ENCODE measurements at regions of chr2 and their contacts with region 1.

Region 1: DNA sequence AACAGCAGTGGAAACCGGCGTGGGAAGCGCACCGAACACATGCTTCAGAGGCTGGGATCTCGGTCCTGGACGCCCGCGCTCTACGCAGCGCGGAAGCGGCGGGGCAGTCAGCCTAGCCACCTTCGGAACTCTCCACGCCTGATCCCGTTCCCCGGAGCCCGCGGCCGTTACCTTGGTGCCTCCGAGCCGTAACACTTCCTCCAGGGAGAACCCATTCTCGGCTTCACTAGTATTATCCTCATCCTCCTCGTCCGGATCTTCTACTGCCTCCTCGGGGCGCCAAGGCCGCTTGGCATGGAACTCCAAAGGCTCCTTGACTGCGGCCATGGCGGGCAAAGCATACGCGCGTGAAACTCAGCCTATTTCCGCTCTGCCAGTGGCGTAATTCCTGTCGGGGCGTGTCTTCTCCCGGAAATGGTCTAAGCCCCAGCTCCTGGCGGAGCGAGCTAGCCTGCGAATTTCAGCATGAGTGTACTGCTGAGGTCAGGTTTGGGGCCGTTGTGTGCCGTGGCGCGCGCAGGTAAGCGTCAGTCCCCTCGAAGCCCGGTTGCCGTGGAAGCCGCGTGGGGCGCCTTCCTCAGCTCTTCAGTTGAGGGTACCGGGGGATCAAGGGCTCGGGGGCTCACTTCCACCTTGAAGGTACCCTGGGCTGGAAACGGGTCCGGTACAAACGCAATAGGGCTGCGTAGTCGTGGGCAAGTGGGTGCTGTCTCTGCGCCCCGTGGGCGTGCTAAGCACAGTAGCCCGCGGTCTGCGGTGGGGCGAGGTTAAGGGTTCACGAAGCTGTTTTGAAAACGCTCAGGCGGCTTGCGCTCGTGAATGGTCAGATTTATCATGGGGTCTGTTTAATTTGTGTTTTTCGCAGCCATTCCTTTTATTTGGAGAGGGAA is at the starts of genes CEBPZ and NDUFAF7:
- DNase-seq: peak; percentile 71 to 87 (median 84)
- ATAC-seq: peak; percentile 95
- H3K4me3 ChIP-seq: peak within 1 kb of the TSS; percentile 84
- H3K4me3 Mint-ChIP-seq: no peak within 1 kb of the TSS
- H3K27ac ChIP-seq: peak within 1 kb of the TSS; percentile 93
- H3K27ac Mint-ChIP-seq: no peak within 1 kb of the TSS
- H3K4me1 ChIP-seq: peaks cover 31 to 39% of the 10 kb centered on the region in 2 donors
- H3K4me1 Mint-ChIP-seq: peaks cover 25 to 54% (median 43%) of the 10 kb centered on the region in 7 donors
- H3K27me3 ChIP-seq: no peaks in the 10 kb centered on the region
- H3K27me3 Mint-ChIP-seq: no peaks in the 10 kb centered on the region
- total RNA-seq, gene CEBPZ: 40.4 to 67.6 (median 56.4) TPM
- total RNA-seq, gene NDUFAF7: 21.6 to 38.2 (median 28.5) TPM

Region 2: GRCh38 chr2:37083873-37084794 is 147.4 kb before region 1 on chr2 and contains the starts of genes GPATCH11 and HEATR5B:
- CTCF ChIA-PET with region 1: no interaction called
- POLR2A ChIA-PET with region 1: no interaction called
- intact Hi-C with region 1: loop called (anchors 1 kb)
- DNase-seq: peak; percentile 76 to 94 (median 92)
- ATAC-seq: peak; percentile 87
- H3K4me3 ChIP-seq: peak within 1 kb of the TSS; percentile 74
- H3K4me3 Mint-ChIP-seq: peak within 1 kb of the TSS in 1 of 10 donors; percentile 64
- H3K27ac ChIP-seq: peak within 1 kb of the TSS; percentile 85
- H3K27ac Mint-ChIP-seq: no peak within 1 kb of the TSS
- H3K4me1 ChIP-seq: peaks cover 35 to 45% of the 10 kb centered on the region in 2 donors
- H3K4me1 Mint-ChIP-seq: peaks cover 8 to 62% (median 50%) of the 10 kb centered on the region in 7 donors
- H3K27me3 ChIP-seq: no peaks in the 10 kb centered on the region
- H3K27me3 Mint-ChIP-seq: no peaks in the 10 kb centered on the region
- total RNA-seq, gene GPATCH11: 6.0 to 19.0 (median 11.1) TPM
- total RNA-seq, gene HEATR5B: 25.2 to 50.5 (median 39.3) TPM

Region 3: DNA sequence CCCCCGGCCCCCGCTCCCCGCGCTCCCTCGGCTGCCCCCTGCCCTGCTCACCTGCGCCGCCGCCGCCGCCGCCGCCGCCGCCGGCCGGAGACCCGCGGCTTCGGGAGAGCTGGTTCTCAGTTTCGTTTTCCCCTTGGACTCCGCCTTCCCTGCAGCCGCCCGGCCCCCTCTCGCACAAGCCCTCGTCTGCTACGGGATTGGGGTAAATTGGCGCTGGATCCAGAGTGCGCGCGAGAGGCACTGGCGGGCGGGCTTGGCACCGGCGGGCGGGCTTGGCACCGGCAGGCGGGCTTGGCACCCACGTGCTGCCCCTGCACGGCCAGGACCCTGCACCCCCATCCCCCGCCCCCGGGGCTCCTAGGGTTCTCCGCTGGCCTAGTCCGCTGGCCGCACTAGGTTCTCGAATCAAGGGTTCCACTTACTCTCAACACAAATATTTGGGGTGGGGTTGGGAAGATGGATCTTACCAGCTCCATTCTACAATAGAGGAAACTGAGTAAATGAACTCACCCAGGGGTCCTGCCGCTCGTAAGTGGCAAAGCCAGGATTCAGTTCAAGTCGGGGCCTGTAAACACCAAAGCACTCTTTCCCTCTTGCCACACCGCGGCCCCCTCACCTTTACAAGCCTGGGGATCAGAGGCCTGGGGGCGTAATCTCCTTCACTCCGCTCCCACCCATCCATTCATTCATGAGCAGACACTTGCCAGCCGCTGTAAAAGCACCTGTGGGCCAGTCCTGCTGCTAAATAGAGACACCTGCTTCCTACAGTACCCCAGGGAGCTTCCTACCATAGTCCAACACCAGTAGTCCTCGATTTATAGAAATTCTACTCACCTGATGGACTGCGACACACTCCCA is 74.4 kb before region 1 on chr2 and contains the start of gene EIF2AK2:
- CTCF ChIA-PET with region 1: no interaction called
- POLR2A ChIA-PET with region 1: no interaction called
- intact Hi-C with region 1: loop called (anchors 1 kb)
- DNase-seq: peak; percentile 59 to 85 (median 80)
- ATAC-seq: peak; percentile 96
- H3K4me3 ChIP-seq: peak within 1 kb of the TSS; percentile 92
- H3K4me3 Mint-ChIP-seq: peak within 1 kb of the TSS; percentile 88 to 99 (median 94)
- H3K27ac ChIP-seq: peak within 1 kb of the TSS; percentile 81
- H3K27ac Mint-ChIP-seq: peak within 1 kb of the TSS; percentile 86 to 96 (median 92)
- H3K4me1 ChIP-seq: peaks cover 18 to 25% of the 10 kb centered on the region in 2 donors
- H3K4me1 Mint-ChIP-seq: peaks cover 29 to 57% (median 48%) of the 10 kb centered on the region in 7 donors
- H3K27me3 ChIP-seq: no peaks in the 10 kb centered on the region
- H3K27me3 Mint-ChIP-seq: peaks cover 0 to 4% (median 0%) of the 10 kb centered on the region in 5 donors
- total RNA-seq, gene EIF2AK2: 21.2 to 91.9 (median 24.2) TPM

Region 4: GRCh38 chr2:37168217-37168981 is 63.1 kb before region 1 on chr2:
- CTCF ChIA-PET with region 1: no interaction called
- POLR2A ChIA-PET with region 1: no interaction called
- intact Hi-C with region 1: loop called (anchors 2 kb)
- DNase-seq: peak in 6 of 9 donors; percentile 14 to 52 (median 40)
- ATAC-seq: peak; percentile 80
- H3K4me3 ChIP-seq: no peak overlapping the region
- H3K4me3 Mint-ChIP-seq: no peak overlapping the region
- H3K27ac ChIP-seq: no peak overlapping the region
- H3K27ac Mint-ChIP-seq: peak overlapping the region in 1 of 9 donors; percentile 32
- H3K4me1 ChIP-seq: no peaks in the 10 kb centered on the region
- H3K4me1 Mint-ChIP-seq: no peaks in the 10 kb centered on the region
- H3K27me3 ChIP-seq: no peaks in the 10 kb centered on the region
- H3K27me3 Mint-ChIP-seq: peaks cover 0 to 3% (median 0%) of the 10 kb centered on the region in 5 donors

Region 5: DNA sequence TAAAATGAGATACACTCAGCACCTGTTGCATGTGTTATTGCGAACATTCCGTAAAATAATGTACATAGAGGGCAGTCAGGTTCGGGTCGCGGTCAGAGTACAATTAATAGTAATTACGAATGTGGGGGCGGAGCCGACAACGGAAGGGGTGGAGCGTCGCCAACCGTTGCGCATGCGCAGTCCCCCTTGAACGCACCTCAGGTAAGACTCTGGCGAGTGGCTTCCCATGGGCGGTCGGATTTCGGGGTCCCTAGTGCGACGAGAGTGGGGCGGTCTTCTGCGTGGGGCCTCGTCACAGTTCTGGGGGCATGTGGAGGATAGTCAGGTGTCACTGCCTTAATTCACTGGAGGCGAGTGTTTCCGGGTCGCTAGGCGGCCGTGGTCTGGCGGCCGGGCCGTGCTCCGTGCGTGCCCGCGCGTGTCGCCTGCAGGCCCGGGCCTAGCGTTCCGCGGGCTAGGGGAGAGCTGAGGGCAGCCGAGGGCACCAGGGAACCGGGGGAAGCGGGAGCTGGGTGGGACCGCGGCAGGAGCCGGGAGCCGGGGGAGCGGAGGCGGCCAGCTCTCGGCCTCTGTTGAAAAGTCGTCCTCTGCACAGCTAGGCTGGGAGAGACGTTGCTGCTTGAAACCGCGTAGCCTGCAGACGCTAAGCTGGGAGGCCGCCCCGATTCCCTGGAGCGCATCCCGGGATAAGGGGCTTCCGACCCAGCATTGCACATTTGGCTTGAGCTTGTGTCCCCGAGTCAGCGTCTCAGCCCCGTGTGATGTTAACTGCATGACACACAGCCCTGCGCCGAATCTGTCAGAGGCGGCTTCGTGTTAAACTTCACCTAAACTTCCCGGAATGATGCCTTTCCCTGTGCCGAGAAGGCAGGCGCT is 34.9 kb before region 1 on chr2 and contains the start of gene CEBPZOS:
- CTCF ChIA-PET with region 1: no interaction called
- POLR2A ChIA-PET with region 1: interaction called, 14 read pairs
- intact Hi-C with region 1: loop called (anchors 1 kb)
- DNase-seq: peak; percentile 82 to 91 (median 88)
- ATAC-seq: peak; percentile 92
- H3K4me3 ChIP-seq: peak within 1 kb of the TSS; percentile 90
- H3K4me3 Mint-ChIP-seq: peak within 1 kb of the TSS; percentile 93 to 100 (median 99)
- H3K27ac ChIP-seq: peak within 1 kb of the TSS; percentile 82
- H3K27ac Mint-ChIP-seq: peak within 1 kb of the TSS; percentile 93 to 99 (median 99)
- H3K4me1 ChIP-seq: peaks cover 10 to 15% of the 10 kb centered on the region in 2 donors
- H3K4me1 Mint-ChIP-seq: peaks cover 14 to 47% (median 34%) of the 10 kb centered on the region in 7 donors
- H3K27me3 ChIP-seq: no peaks in the 10 kb centered on the region
- H3K27me3 Mint-ChIP-seq: peaks cover 0 to 5% (median 0%) of the 10 kb centered on the region in 5 donors
- total RNA-seq, gene CEBPZOS: 26.9 to 40.7 (median 40.4) TPM

Region 6: GRCh38 chr2:37244017-37244416 is 12.5 kb after region 1 on chr2:
- CTCF ChIA-PET with region 1: no interaction called
- POLR2A ChIA-PET with region 1: interaction called, 10 read pairs
- intact Hi-C with region 1: loop called in 1 of 2 experiments (anchors 2 kb)
- DNase-seq: peak in 2 of 9 donors; percentile 15 to 19
- ATAC-seq: peak; percentile 63
- H3K4me3 ChIP-seq: no peak overlapping the region
- H3K4me3 Mint-ChIP-seq: peak overlapping the region in 3 of 10 donors; percentile 7 to 58 (median 54)
- H3K27ac ChIP-seq: peak overlapping the region; percentile 8
- H3K27ac Mint-ChIP-seq: peak overlapping the region; percentile 30 to 92 (median 86)
- H3K4me1 ChIP-seq: no peaks in the 10 kb centered on the region
- H3K4me1 Mint-ChIP-seq: peaks cover 5 to 41% (median 19%) of the 10 kb centered on the region in 7 donors
- H3K27me3 ChIP-seq: no peaks in the 10 kb centered on the region
- H3K27me3 Mint-ChIP-seq: no peaks in the 10 kb centered on the region

Region 7: GRCh38 chr2:37376421-37377186 is 145.1 kb after region 1 on chr2:
- CTCF ChIA-PET with region 1: no interaction called
- POLR2A ChIA-PET with region 1: no interaction called
- intact Hi-C with region 1: loop called in 1 of 2 experiments (anchors 5 kb)
- DNase-seq: peak in 8 of 9 donors; percentile 27 to 69 (median 56)
- ATAC-seq: peak; percentile 86
- H3K4me3 ChIP-seq: no peak overlapping the region
- H3K4me3 Mint-ChIP-seq: peak overlapping the region in 9 of 10 donors; percentile 33 to 80 (median 63)
- H3K27ac ChIP-seq: no peak overlapping the region
- H3K27ac Mint-ChIP-seq: peak overlapping the region in 4 of 9 donors; percentile 16 to 65 (median 35)
- H3K4me1 ChIP-seq: peaks cover 13 to 17% of the 10 kb centered on the region in 2 donors
- H3K4me1 Mint-ChIP-seq: peaks cover 11 to 30% (median 17%) of the 10 kb centered on the region in 7 donors
- H3K27me3 ChIP-seq: peaks cover 0 to 6% of the 10 kb centered on the region in 2 donors
- H3K27me3 Mint-ChIP-seq: peaks cover 25 to 66% (median 53%) of the 10 kb centered on the region in 5 donors

Measured in naive thymus-derived CD4-positive, alpha-beta T cell (primary cell).